ENCODE measurements at regions of chr2 and their contacts with region 1.

Region 1: GRCh38 chr2:152635635-152636298 is 81.5 kb downstream of the PRPF40A start:
- DNase-seq: peak; percentile 58
- CTCF ChIP-seq: peak; percentile 76

Region 2: DNA sequence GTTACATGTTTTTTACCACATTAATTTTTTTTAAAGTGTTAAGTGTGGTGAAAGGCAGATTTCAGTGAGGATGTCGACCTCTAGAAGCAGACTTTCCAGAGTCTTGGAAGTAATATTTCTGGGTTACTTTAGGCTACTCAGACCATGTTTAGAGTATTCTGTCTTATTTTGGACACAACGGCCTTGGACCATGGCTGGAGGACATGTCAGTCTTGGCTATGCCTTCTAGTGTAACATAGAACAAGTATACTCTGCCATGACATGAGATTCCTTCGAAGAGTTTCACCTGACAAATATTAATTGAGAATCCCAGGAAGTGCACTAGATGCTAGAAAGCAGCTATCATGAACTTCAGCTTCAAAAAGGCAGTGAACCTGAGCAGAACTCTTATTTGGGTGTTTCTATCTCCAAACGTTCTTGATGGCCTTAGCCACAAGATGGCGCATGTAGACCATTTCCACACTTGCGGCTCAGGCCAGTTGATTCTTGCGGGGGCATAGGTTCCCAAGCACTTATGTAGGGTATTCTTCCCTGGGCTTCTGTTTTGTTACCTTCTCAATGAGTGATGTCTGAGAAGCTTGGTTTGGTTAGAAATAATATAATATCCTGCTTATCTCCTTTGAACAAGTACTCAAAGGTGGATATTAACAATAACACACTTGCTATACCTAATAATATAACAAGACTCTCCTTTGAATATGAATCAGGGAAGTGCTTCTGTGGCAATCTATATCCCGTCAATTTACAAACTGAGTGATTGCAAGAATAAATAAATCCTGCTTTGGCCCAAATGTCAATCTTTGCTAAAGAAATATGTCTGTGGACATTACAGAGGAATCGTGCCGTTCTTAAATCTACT is 598.9 kb before region 1 on chr2:
- CTCF ChIA-PET with region 1: interaction called, 30 read pairs
- POLR2A ChIA-PET with region 1: no interaction called
- DNase-seq: peak; percentile 74
- CTCF ChIP-seq: peak; percentile 81

Region 3: GRCh38 chr2:152183401-152184073 is 452.2 kb before region 1 on chr2:
- CTCF ChIA-PET with region 1: interaction called, 11 read pairs
- POLR2A ChIA-PET with region 1: no interaction called
- DNase-seq: no peak
- CTCF ChIP-seq: no peak

Region 4: GRCh38 chr2:152611458-152612231 is 24.1 kb before region 1 on chr2:
- CTCF ChIA-PET with region 1: interaction called, 41 read pairs
- POLR2A ChIA-PET with region 1: no interaction called
- DNase-seq: peak; percentile 57
- CTCF ChIP-seq: no peak

Region 5: GRCh38 chr2:152648336-152648735 is 12.6 kb after region 1 on chr2:
- CTCF ChIA-PET with region 1: interaction called, 65 read pairs
- POLR2A ChIA-PET with region 1: no interaction called
- DNase-seq: no peak
- CTCF ChIP-seq: no peak

Region 6: DNA sequence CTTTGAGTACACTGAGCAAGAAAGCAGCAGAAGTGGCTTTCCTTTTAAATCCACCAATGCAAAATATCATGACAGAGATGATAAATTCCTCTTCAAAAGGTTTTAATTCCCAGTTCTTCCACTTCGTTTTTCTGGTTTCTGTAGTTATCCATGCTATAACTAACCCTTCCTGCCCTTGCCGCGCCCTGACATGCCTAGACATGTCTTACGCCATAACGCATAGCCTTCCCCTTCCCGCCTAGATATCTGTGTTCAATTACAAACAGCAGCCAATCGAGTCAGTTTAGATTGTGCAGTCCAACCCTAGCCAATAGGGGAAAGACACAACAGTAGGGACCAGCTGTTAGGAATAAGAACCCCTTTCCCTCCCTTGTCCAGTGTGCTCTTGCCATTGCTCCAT is 65.4 kb after region 1 on chr2:
- CTCF ChIA-PET with region 1: no interaction called
- POLR2A ChIA-PET with region 1: no interaction called
- DNase-seq: no peak
- CTCF ChIP-seq: no peak